Activated T-helper 1 cell treated with anti-CD3 and anti-CD28 coated beads, Interleukin-12 subunit alpha, Interleukin-12 subunit beta, Interleukin-2, Interleukin-4 antibody, amounts not matched to agents 30 ng/mL and 10 ng/mL and 1 ng/mL, durations not matched to agents 14 hours and 24 hours and 36 hours (primary cell): ENCODE measurements at regions of chr22 and their contacts with region 1.

Region 1: DNA sequence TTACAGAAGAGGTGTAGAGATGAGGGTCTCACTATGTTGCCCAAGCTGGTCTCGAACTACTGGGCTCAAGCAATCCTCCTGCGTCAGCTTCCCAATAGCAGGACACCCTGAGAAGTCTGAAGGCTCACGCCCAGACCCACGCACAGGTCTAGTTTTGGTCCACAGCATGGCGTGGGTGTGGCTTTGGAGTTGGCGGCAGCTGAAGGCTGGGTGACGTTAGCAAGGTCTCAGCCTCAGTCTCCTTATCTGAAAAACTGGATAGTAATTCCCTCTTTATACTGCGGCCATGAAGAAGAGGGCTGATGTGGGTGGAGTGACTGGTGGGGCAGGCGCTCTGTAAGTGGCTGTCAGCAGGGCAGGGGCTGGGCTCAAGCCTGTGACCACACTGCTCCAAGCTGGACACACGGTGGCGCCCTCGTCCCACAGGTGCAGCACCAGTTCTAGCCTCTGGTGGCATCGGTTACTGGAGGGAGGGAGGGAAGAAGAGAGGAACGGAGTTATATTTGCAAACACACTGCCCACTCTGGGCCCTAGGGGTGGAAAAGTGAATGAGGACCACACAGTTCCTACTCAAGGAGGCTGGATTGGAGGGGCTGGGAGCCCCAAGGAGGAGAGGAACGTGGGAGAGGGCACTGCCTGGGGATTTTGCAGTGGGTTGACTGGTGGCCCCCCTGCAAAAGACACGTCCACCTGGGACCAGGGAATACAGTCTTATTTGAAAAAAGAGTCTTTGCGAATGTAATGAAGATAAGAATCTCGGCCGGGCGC is 19.6 kb upstream of the CARD10 start:
- DNase-seq: peak; percentile 83
- H3K4me3 Mint-ChIP-seq: peak overlapping the region; percentile 41
- H3K27ac Mint-ChIP-seq: peak overlapping the region; percentile 50
- H3K4me1 Mint-ChIP-seq: peaks cover 40% of the 10 kb centered on the region
- H3K27me3 Mint-ChIP-seq: peaks cover 13% of the 10 kb centered on the region

Region 2: DNA sequence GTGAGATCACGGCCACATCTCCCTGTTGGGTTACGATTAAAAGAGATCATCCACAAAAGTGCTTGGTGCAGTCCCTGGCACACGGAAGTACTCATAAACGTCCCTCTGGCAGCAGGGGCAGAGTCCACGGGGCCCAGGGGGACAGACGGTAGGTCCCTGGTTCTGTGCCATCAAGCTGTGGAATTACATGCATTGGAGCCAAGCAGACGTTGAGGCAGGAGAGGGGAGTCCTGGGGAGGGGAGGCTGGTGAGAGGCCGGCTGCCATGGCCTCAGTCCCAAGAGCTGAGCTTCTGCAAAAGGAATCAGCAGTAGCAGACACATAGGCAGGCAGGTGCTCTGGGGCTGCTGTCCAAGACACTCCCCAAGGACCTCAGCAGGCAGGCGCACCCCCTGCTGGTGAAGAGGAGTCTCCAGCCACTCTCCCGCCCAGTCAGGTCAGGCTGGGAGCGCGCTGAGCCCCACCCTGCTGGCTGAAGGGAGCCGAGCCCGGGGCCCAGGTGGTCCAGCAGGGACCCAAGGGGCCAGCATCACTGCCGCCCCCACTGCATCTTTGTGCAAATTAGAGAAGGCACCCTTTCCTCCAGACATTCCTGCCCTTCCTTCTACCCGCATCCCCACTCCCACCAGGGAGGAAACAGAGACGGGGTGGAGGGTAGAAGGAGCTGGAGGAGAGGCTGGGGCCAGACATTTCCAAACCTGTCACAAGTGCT is 494.8 kb before region 1 on chr22:
- intact Hi-C with region 1: no loop called
- DNase-seq: peak; percentile 39
- H3K4me3 Mint-ChIP-seq: no peak overlapping the region
- H3K27ac Mint-ChIP-seq: no peak overlapping the region
- H3K4me1 Mint-ChIP-seq: peaks cover 19% of the 10 kb centered on the region
- H3K27me3 Mint-ChIP-seq: no peaks in the 10 kb centered on the region

Region 3: GRCh38 chr22:37121887-37122591 is 416.7 kb before region 1 on chr22:
- intact Hi-C with region 1: no loop called
- DNase-seq: peak; percentile 93
- H3K4me3 Mint-ChIP-seq: peak overlapping the region; percentile 86
- H3K27ac Mint-ChIP-seq: peak overlapping the region; percentile 100
- H3K4me1 Mint-ChIP-seq: peaks cover 85% of the 10 kb centered on the region
- H3K27me3 Mint-ChIP-seq: peaks cover 2% of the 10 kb centered on the region

Region 4: GRCh38 chr22:37457093-37457893 is 81.5 kb before region 1 on chr22:
- intact Hi-C with region 1: no loop called
- DNase-seq: peak; percentile 75
- H3K4me3 Mint-ChIP-seq: no peak overlapping the region
- H3K27ac Mint-ChIP-seq: no peak overlapping the region
- H3K4me1 Mint-ChIP-seq: peaks cover 18% of the 10 kb centered on the region
- H3K27me3 Mint-ChIP-seq: no peaks in the 10 kb centered on the region

Region 5: GRCh38 chr22:37525073-37525748 is 13.6 kb before region 1 on chr22:
- intact Hi-C with region 1: no loop called
- DNase-seq: no peak
- H3K4me3 Mint-ChIP-seq: no peak overlapping the region
- H3K27ac Mint-ChIP-seq: no peak overlapping the region
- H3K4me1 Mint-ChIP-seq: peaks cover 8% of the 10 kb centered on the region
- H3K27me3 Mint-ChIP-seq: peaks cover 32% of the 10 kb centered on the region

Region 6: GRCh38 chr22:37561212-37562048 is 22.7 kb after region 1 on chr22:
- intact Hi-C with region 1: loop called (anchors 1 kb)
- DNase-seq: peak; percentile 58
- H3K4me3 Mint-ChIP-seq: peak overlapping the region; percentile 67
- H3K27ac Mint-ChIP-seq: peak overlapping the region; percentile 19
- H3K4me1 Mint-ChIP-seq: peaks cover 40% of the 10 kb centered on the region
- H3K27me3 Mint-ChIP-seq: peaks cover 44% of the 10 kb centered on the region

Region 7: DNA sequence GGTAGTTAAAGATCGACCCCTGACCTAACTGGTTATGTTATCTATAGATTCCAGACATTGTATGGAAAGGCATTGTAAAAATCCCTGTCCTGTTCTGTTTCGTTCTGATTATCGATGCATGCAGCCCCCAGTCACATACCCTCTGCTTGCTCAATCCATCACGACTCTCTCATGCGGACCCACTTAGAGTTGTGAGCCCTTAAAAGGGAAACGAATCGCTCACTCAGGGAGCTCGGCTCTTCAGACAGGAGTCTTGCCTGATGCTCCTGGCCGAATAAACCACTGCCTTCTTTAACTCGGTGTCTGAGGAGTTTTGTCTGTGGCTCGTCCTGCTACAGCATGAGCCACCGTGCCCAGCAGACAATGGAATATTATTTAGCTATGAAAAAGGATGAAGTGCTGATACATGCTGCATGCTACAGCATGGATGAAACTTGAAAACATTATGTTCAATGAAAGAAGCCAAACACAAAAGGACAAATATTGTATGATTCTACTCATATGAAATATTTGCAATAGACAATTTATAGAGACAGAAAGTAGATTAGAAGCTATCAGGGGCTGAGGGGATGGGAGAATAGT is 53.1 kb after region 1 on chr22:
- intact Hi-C with region 1: loop called (anchors 1 kb)
- DNase-seq: no peak
- H3K4me3 Mint-ChIP-seq: peak overlapping the region; percentile 79
- H3K27ac Mint-ChIP-seq: no peak overlapping the region
- H3K4me1 Mint-ChIP-seq: peaks cover 13% of the 10 kb centered on the region
- H3K27me3 Mint-ChIP-seq: peaks cover 11% of the 10 kb centered on the region

Region 8: DNA sequence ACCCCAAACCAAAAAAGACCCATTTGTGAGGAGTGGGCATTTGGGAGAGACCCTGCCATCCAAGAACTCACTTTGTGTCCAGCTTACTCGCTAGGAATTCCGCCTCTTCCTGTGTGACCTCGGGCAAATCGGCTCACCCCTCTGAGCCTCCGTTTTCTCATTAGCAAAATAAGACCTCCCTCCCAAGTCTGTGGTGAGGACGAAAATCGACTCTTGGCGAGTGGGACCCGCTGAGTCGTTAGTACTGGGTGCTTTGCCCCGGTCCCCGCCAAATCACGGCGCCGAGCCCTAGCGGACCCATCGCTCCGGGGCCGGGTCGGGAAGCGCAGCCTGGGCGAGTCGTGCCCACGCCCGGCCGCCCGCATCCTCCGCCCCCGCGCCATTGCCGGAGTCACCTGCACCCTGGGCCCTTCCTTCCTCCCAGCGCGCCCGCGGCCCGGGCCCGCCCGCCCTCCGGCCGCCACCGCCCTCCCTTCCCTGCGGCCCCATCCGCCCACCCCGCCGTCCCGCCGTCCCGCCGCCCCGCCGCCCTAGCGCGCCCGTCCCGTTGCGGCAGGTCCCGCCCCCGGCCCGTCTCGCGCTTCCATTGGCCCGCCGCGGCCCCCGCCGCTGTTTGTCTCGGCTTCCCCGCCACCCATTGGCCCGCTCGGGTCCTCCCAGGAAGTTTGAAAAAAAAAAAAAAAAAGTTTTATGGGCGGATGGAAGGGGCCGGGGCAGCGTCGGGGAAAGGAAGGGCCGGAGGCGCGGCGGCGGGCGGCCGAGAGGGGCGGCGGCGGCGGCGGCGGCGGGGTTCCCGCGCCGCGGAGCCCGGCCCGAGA is 207.0 kb after region 1 on chr22:
- intact Hi-C with region 1: loop called (anchors 10 kb)
- DNase-seq: peak; percentile 85
- H3K4me3 Mint-ChIP-seq: peak overlapping the region; percentile 83
- H3K27ac Mint-ChIP-seq: peak overlapping the region; percentile 74
- H3K4me1 Mint-ChIP-seq: peaks cover 25% of the 10 kb centered on the region
- H3K27me3 Mint-ChIP-seq: no peaks in the 10 kb centered on the region